ENCODE measurements at regions of chr10 and their contacts with region 1.

Region 1: GRCh38 chr10:118046395-118047156 is at the start of gene RAB11FIP2:
- DNase-seq: peak; percentile 96 to 97
- ATAC-seq: peak; percentile 95 to 97 (median 97)
- H3K4me3 ChIP-seq: peak within 1 kb of the TSS; percentile 77 to 93 (median 85)
- H3K27ac ChIP-seq: peak within 1 kb of the TSS; percentile 65 to 96 (median 92)
- H3K4me1 ChIP-seq: peaks cover 0 to 49% (median 43%) of the 10 kb centered on the region in 9 donors
- H3K27me3 ChIP-seq: no peaks in the 10 kb centered on the region
- CTCF ChIP-seq: peak in 6 of 9 donors; percentile 25 to 52 (median 34)
- total RNA-seq, gene RAB11FIP2: 12.2 to 17.2 (median 13.7) TPM

Region 2: DNA sequence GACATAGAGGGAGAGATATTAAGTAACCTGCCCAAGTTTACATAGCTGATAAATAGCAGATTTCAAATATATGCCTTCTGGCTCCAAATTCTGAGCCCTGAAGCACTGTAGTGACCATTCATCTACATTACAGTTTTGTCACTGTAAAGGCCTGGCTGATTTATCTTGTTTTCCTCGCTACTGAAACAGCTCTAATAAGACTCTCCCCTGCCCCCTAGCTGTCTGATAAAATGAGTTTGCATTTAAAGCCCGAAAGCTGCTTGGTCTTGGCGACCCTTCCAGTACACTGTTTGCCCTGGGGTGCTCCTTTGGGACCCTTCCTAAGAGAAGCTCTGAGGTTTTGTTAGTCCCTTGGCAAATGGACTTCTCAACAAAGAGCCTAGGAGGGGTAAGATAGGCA is 59.9 kb after region 1 on chr10:
- intact Hi-C with region 1: no loop called
- DNase-seq: peak in 1 of 2 donors; percentile 10
- ATAC-seq: peak in 1 of 8 donors; percentile 39
- H3K4me3 ChIP-seq: no peak overlapping the region
- H3K27ac ChIP-seq: no peak overlapping the region
- H3K4me1 ChIP-seq: no peaks in the 10 kb centered on the region
- H3K27me3 ChIP-seq: peaks cover 0 to 4% (median 0%) of the 10 kb centered on the region in 7 donors
- CTCF ChIP-seq: peak in 7 of 9 donors; percentile 21 to 56 (median 48)

Region 3: DNA sequence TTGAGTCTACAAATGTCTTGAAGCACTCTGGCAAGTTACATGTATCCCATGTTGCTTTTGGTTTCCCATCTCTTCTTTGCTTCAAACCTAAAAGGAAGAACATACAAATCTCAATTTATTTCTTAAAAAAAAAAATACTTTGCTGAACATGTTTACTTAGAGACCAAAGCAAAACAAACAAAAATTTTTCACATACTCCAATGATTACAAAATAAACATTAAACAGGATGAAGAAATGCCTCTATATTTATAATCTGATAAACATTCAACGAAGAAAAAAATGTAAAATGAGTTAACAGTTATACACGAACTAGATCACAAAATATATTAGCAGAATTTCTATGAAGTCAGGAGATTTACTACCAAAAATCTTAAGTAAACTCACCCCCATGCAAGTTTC is 264.2 kb after region 1 on chr10:
- intact Hi-C with region 1: loop called in 1 of 10 experiments (anchors 10 kb)
- DNase-seq: no peak
- ATAC-seq: no peak
- H3K4me3 ChIP-seq: no peak overlapping the region
- H3K27ac ChIP-seq: no peak overlapping the region
- H3K4me1 ChIP-seq: peaks cover 0 to 21% (median 6%) of the 10 kb centered on the region in 9 donors
- H3K27me3 ChIP-seq: no peaks in the 10 kb centered on the region
- CTCF ChIP-seq: no peak

Region 4: DNA sequence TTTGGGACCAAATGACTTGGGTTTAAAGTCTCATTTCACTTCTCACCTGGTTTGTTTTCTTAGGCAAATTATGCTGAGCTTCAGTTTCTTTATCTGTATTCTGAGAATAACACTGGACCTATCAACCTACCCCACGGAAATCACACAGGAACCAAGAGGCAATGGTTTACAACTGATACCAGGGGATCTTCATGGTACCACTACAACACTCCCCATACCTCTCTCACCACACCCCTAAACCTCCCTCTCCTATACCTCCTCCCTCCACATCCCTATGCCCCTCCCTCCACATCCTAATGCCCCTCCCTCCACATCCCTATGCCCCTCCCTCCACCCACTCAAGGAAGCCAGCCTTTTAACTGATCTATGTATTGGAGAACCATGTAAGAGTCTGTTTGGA is 285.7 kb after region 1 on chr10:
- intact Hi-C with region 1: loop called in 1 of 10 experiments (anchors 10 kb)
- DNase-seq: no peak
- ATAC-seq: no peak
- H3K4me3 ChIP-seq: no peak overlapping the region
- H3K27ac ChIP-seq: no peak overlapping the region
- H3K4me1 ChIP-seq: peaks cover 0 to 17% (median 8%) of the 10 kb centered on the region in 9 donors
- H3K27me3 ChIP-seq: no peaks in the 10 kb centered on the region
- CTCF ChIP-seq: no peak

Measured in heart right ventricle (tissue), 16 donors.